Common myeloid progenitor, CD34-positive (primary cell): ENCODE measurements at regions of chr2 and their contacts with region 1.

Region 1: GRCh38 chr2:98649135-98649991 is 41.0 kb downstream of the UNC50 start:
- DNase-seq: peak; percentile 79 to 89 (median 83)
- H3K4me3 ChIP-seq: no peak overlapping the region
- H3K27ac ChIP-seq: no peak overlapping the region
- H3K4me1 ChIP-seq: peaks cover 0 to 8% (median 2%) of the 10 kb centered on the region in 4 experiments
- H3K27me3 ChIP-seq: no peaks in the 10 kb centered on the region

Region 2: DNA sequence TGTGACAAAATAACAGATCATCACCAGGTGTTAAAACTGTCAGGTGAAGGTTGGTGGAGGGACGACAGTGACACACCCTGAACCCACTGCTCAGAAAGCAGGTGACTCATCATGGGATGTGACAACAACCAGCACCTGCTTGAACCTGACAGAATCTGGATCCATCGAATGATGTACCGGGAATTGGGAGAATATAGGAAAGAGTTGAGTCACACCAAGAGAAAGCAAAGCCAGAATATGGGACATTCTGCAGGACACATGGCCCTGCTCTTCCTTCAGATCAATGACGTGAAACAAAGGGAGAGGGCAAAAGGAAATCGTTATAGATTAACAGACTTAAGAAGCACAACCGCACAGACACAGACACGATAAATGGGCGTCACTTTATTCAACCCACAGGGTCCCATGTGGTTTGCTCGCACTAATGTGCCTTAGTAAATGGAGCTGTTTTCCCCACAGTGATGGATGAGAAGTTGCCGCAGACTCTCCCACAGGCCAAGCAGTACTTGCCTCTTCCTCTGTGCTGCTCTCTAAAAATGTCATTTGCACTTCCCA is 186.5 kb after region 1 on chr2:
- CTCF ChIA-PET with region 1: interaction called, 34 read pairs
- POLR2A ChIA-PET with region 1: no interaction called
- DNase-seq: no peak
- H3K4me3 ChIP-seq: no peak overlapping the region
- H3K27ac ChIP-seq: no peak overlapping the region
- H3K4me1 ChIP-seq: peaks cover 0 to 3% (median under 1%) of the 10 kb centered on the region in 4 experiments
- H3K27me3 ChIP-seq: no peaks in the 10 kb centered on the region

Region 3: GRCh38 chr2:98893911-98894321 is 244.6 kb after region 1 on chr2:
- CTCF ChIA-PET with region 1: no interaction called
- POLR2A ChIA-PET with region 1: no interaction called
- DNase-seq: peak in 1 of 3 donors; percentile 14
- H3K4me3 ChIP-seq: no peak overlapping the region
- H3K27ac ChIP-seq: no peak overlapping the region
- H3K4me1 ChIP-seq: no peaks in the 10 kb centered on the region
- H3K27me3 ChIP-seq: no peaks in the 10 kb centered on the region

Region 4: DNA sequence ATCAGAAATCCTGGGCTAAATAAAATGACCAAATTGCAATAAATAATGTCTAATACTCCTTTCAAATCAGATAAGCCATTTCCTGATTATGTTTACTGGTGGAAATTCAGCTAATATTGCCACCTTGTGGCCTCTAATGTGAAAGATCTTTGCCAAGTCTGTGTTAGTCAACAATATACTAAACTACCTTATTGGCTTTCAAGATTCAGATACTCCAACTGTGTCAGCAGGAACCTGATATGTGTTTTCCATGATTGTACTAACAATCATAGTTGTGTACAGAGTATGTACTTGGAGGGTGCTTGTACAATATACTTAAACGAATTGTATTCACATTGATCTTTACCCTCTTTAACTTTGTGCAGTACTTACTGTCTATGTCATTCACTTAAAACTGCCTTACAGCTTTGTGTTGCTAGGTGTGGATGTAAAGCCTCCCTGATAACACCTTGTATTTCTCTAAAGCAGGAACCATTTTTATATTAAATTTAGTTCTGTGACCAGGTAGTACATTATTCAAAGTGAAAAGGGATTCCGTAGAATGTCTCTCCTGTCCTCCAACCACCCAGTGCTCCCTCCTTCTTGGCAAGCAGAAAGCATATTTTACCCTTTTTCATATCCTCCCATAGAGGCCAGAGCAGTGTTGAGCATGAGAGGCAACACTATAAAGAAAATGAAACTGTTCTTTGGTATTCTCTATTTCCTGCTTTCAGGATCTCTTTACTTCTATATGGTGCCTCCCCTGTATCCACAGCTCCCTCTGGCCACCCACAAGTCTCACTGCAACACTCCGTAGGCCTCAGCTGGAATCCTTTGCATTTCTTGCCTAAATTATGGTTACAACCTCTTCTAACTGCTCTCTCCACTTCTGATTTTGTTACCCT is 417.0 kb after region 1 on chr2:
- CTCF ChIA-PET with region 1: interaction called, 19 read pairs
- POLR2A ChIA-PET with region 1: no interaction called
- DNase-seq: peak; percentile 72 to 77 (median 72)
- H3K4me3 ChIP-seq: peak overlapping the region in 3 of 7 experiments; percentile 1 to 64 (median 8)
- H3K27ac ChIP-seq: peak overlapping the region; percentile 25 to 55
- H3K4me1 ChIP-seq: peaks cover 0 to 20% (median 13%) of the 10 kb centered on the region in 4 experiments
- H3K27me3 ChIP-seq: no peaks in the 10 kb centered on the region